HepG2 (cell line): ENCODE measurements at regions of chr5 and their contacts with region 1.

Region 1: GRCh38 chr5:128083033-128083810 is at the start of gene SLC12A2:
- DNase-seq: peak; percentile 68
- ATAC-seq: peak; percentile 79
- H3K4me3 ChIP-seq: peak within 1 kb of the TSS; percentile 57 to 75 (median 73)
- H3K27ac ChIP-seq: peak within 1 kb of the TSS; percentile 81
- H3K4me1 ChIP-seq: peaks cover 15% of the 10 kb centered on the region
- H3K27me3 ChIP-seq: peaks cover 0 to 5% of the 10 kb centered on the region in 2 experiments; a peak in 1 of 5 replicates
- CTCF ChIP-seq: no peak
- EP300 ChIP-seq: no peak
- POLR2A ChIP-seq: peak; percentile 48 to 72; a peak in 3 of 4 replicates
- RAD21 ChIP-seq: no peak
- total RNA-seq, gene SLC12A2: 7.2 and 9.7 TPM in 2 replicates

Region 2: GRCh38 chr5:127875235-127876021 is 207.8 kb before region 1 on chr5:
- CTCF ChIA-PET with region 1: no interaction called
- POLR2A ChIA-PET with region 1: no interaction called
- in situ Hi-C with region 1: loop called (anchors 25 kb)
- intact Hi-C with region 1: loop called (anchors 5 kb)
- DNase-seq: peak; percentile 75
- ATAC-seq: peak; percentile 98
- H3K4me3 ChIP-seq: no peak overlapping the region
- H3K27ac ChIP-seq: no peak overlapping the region
- H3K4me1 ChIP-seq: peaks cover 9% of the 10 kb centered on the region
- H3K27me3 ChIP-seq: no peaks in the 10 kb centered on the region
- CTCF ChIP-seq: peak; percentile 80
- EP300 ChIP-seq: no peak
- POLR2A ChIP-seq: no peak
- RAD21 ChIP-seq: peak; percentile 66

Region 3: DNA sequence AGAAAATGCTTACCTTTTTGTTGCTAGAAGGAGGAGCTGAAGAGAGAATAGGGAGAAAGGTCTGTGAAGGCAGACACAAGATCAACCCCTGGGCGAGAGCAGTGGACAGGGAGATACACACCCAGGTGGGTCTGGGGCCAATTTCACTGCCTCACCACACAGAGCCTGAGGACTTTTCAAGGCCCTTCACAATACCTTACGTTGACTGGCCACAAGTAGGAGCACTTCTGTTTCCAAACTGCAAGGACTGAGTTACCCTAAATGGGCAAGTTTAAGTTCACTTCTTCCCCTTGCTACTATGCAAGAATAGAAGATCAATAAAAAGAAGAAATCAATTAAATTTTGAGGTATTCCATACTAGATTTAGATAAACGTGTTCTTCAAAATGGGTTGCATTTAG is 174.1 kb before region 1 on chr5:
- CTCF ChIA-PET with region 1: interaction called, 3 read pairs
- POLR2A ChIA-PET with region 1: no interaction called
- in situ Hi-C with region 1: no loop called
- intact Hi-C with region 1: loop called (anchors 5 kb)
- DNase-seq: peak; percentile 42
- ATAC-seq: peak; percentile 97
- H3K4me3 ChIP-seq: no peak overlapping the region
- H3K27ac ChIP-seq: no peak overlapping the region
- H3K4me1 ChIP-seq: peaks cover 6% of the 10 kb centered on the region; the same call in 1 of the 2 replicates
- H3K27me3 ChIP-seq: no peaks in the 10 kb centered on the region
- CTCF ChIP-seq: peak; percentile 60
- EP300 ChIP-seq: no peak
- POLR2A ChIP-seq: no peak
- RAD21 ChIP-seq: peak; percentile 18; the same call in 1 of the 2 replicates

Region 4: DNA sequence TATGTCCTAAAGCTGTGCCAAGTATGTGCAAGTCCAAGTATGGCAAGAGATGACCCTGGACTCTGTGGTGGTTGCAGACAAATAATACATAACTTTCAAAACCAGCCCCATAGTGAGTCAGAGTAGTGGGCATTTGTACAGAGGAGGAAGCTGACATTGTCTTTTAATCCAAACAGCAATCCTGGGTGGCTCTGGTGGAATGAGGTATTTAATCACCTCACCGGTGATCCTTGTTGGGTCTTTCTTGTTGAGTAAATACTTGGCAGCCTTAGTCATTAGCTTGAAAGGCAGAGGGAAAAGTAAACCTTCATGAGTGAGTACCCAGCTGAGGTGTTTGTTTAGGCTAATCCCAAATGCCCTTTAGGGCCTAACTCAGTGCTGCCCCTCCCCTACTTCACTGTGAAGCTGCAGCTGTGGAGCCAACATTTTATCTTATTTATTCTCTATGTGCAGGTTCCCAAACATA is 148.4 kb before region 1 on chr5:
- CTCF ChIA-PET with region 1: no interaction called
- POLR2A ChIA-PET with region 1: no interaction called
- in situ Hi-C with region 1: no loop called
- intact Hi-C with region 1: loop called (anchors 1 kb)
- DNase-seq: peak; percentile 97
- ATAC-seq: peak; percentile 97
- H3K4me3 ChIP-seq: no peak overlapping the region
- H3K27ac ChIP-seq: no peak overlapping the region
- H3K4me1 ChIP-seq: peaks cover 24% of the 10 kb centered on the region
- H3K27me3 ChIP-seq: 0 out of 5 replicates have a peak, but pooled peaks cover 0 to 3% of the 10 kb centered on the region in 2 experiments
- CTCF ChIP-seq: peak; percentile 43
- EP300 ChIP-seq: peak in 1 of 2 experiments; percentile 70; a peak in 2 of 4 replicates
- POLR2A ChIP-seq: no peak
- RAD21 ChIP-seq: no peak

Region 5: GRCh38 chr5:127959152-127959764 is 124.0 kb before region 1 on chr5:
- CTCF ChIA-PET with region 1: no interaction called
- POLR2A ChIA-PET with region 1: no interaction called
- in situ Hi-C with region 1: no loop called
- intact Hi-C with region 1: no loop called
- DNase-seq: peak; percentile 59
- ATAC-seq: no peak; the same call in 1 of the 3 replicates
- H3K4me3 ChIP-seq: no peak overlapping the region
- H3K27ac ChIP-seq: peak overlapping the region; percentile 57
- H3K4me1 ChIP-seq: peaks cover 40% of the 10 kb centered on the region
- H3K27me3 ChIP-seq: no peaks in the 10 kb centered on the region
- CTCF ChIP-seq: no peak
- EP300 ChIP-seq: no peak
- POLR2A ChIP-seq: no peak
- RAD21 ChIP-seq: no peak

Region 6: GRCh38 chr5:128111818-128112448 is 28.7 kb after region 1 on chr5:
- CTCF ChIA-PET with region 1: no interaction called
- POLR2A ChIA-PET with region 1: no interaction called
- in situ Hi-C with region 1: no loop called
- intact Hi-C with region 1: no loop called
- DNase-seq: no peak
- ATAC-seq: no peak
- H3K4me3 ChIP-seq: no peak overlapping the region
- H3K27ac ChIP-seq: no peak overlapping the region
- H3K4me1 ChIP-seq: no peaks in the 10 kb centered on the region
- H3K27me3 ChIP-seq: no peaks in the 10 kb centered on the region
- CTCF ChIP-seq: no peak
- EP300 ChIP-seq: no peak
- POLR2A ChIP-seq: no peak
- RAD21 ChIP-seq: no peak